ENCODE measurements at regions of chr6 and their contacts with region 1.

Region 1: GRCh38 chr6:25070547-25071366 is 135.0 kb upstream of the RIPOR2 start:
- DNase-seq: peak; percentile 69 to 71
- H3K4me3 ChIP-seq: no peak overlapping the region
- H3K4me3 Mint-ChIP-seq: no peak overlapping the region
- H3K27ac Mint-ChIP-seq: no peak overlapping the region
- H3K4me1 ChIP-seq: no peaks in the 10 kb centered on the region
- H3K4me1 Mint-ChIP-seq: no peaks in the 10 kb centered on the region
- H3K27me3 ChIP-seq: no peaks in the 10 kb centered on the region
- H3K27me3 Mint-ChIP-seq: no peaks in the 10 kb centered on the region
- CTCF ChIP-seq: peak; percentile 78 to 83

Region 2: DNA sequence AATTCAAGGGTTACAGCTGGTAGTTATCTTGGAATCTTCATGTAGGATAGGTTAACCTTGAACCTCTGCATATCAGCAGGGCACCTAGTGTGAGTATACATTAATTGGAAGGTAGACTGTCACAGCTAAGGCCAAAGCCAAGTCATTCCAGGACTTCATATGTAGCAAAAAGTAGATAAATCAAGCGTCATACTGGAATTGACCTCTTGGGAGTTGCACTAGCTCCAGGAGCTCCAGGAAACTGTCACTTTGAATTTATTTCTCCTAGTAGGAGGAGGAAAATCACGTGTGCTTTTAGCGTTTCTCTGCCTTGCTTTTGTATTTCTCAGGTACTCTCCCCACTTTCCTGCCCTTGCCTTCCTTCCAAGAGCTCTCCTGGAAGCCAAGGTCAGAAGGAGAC is 165.3 kb before region 1 on chr6:
- CTCF ChIA-PET with region 1: no interaction called
- POLR2A ChIA-PET with region 1: no interaction called
- intact Hi-C with region 1: no loop called
- DNase-seq: no peak
- H3K4me3 ChIP-seq: no peak overlapping the region
- H3K4me3 Mint-ChIP-seq: no peak overlapping the region
- H3K27ac Mint-ChIP-seq: no peak overlapping the region
- H3K4me1 ChIP-seq: no peaks in the 10 kb centered on the region
- H3K4me1 Mint-ChIP-seq: no peaks in the 10 kb centered on the region
- H3K27me3 ChIP-seq: peaks cover 2% of the 10 kb centered on the region
- H3K27me3 Mint-ChIP-seq: peaks cover 11% of the 10 kb centered on the region
- CTCF ChIP-seq: no peak

Region 3: DNA sequence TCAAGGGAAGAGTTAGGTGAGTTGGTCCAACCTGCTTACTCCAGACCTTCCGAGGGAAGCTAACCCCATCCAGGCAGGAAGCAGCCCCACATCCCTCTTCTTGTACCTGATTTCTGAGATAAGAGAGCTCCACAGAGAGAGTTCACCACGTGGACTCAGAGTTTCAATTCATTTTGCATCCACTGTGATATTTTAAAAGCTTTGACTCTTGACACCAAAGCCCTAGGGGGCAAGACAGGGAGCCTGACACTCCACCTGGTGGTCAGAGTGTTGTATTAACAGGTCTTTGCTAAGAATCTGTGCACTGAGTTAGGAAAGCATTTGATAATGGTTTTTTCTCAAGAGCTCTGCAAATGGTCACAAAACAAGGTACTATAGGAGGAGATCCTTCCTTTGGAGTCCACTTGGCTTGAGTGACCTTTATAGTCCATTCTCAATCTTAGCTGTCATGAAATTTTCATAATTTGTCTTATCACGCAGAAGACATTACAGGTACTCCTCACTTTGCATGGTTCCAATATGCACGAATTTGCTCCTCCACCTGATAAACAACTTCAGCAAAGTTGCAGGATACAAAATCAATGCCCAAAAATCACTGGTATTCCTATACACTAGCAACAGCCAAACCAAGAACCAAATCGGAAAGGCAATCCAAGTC is 78.8 kb before region 1 on chr6:
- CTCF ChIA-PET with region 1: interaction called, 7 read pairs
- POLR2A ChIA-PET with region 1: no interaction called
- intact Hi-C with region 1: loop called (anchors 1 kb)
- DNase-seq: peak; percentile 41 to 64
- H3K4me3 ChIP-seq: no peak overlapping the region
- H3K4me3 Mint-ChIP-seq: no peak overlapping the region
- H3K27ac Mint-ChIP-seq: no peak overlapping the region
- H3K4me1 ChIP-seq: peaks cover 6% of the 10 kb centered on the region; the same call in 1 of the 2 replicates
- H3K4me1 Mint-ChIP-seq: peaks cover 17% of the 10 kb centered on the region
- H3K27me3 ChIP-seq: no peaks in the 10 kb centered on the region
- H3K27me3 Mint-ChIP-seq: no peaks in the 10 kb centered on the region
- CTCF ChIP-seq: peak; percentile 63 to 68

Region 4: DNA sequence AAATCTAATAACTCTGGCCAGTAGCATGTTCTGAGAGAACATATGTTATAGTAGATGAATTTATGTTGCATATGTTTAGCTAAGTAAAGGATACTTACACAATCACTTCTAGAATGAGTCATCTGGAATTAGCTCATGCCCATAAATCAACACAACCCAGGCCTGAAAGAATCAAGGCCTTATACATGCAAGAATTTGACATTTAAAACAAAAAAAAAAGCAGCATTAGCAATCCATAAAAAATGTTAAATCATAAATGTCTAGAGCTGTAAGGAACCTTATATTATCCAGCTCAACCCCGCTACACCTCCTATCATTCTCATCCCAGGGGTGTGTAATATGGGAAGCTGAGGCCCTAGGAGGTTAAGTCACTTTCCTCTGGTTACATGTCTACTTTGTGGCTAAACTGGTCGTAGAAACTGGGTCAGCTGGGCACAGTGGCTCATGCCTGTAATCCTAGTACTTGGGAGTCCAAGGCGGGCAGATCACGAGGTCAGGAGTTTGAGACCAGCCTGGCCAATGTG is 103.3 kb after region 1 on chr6:
- CTCF ChIA-PET with region 1: no interaction called
- POLR2A ChIA-PET with region 1: no interaction called
- intact Hi-C with region 1: loop called (anchors 2 kb)
- DNase-seq: no peak
- H3K4me3 ChIP-seq: no peak overlapping the region
- H3K4me3 Mint-ChIP-seq: no peak overlapping the region
- H3K27ac Mint-ChIP-seq: no peak overlapping the region
- H3K4me1 ChIP-seq: peaks cover 30% of the 10 kb centered on the region
- H3K4me1 Mint-ChIP-seq: peaks cover 35% of the 10 kb centered on the region
- H3K27me3 ChIP-seq: no peaks in the 10 kb centered on the region
- H3K27me3 Mint-ChIP-seq: no peaks in the 10 kb centered on the region
- CTCF ChIP-seq: no peak

Measured in Caco-2 (cell line).